Panc1 (cell line): ENCODE measurements at regions of chr11 and their contacts with region 1.

Region 1: GRCh38 chr11:64358907-64359711 is at the start of gene RPS6KA4:
- DNase-seq: no peak
- ATAC-seq: peak; percentile 79
- H3K4me3 ChIP-seq: peak within 1 kb of the TSS; percentile 76 to 86
- H3K27ac ChIP-seq: peak within 1 kb of the TSS; percentile 88
- H3K4me1 ChIP-seq: peaks cover 48% of the 10 kb centered on the region
- H3K27me3 ChIP-seq: no peaks in the 10 kb centered on the region
- CTCF ChIP-seq: no peak
- total RNA-seq, gene RPS6KA4: 74.0 TPM

Region 2: GRCh38 chr11:64165849-64166635 is 193.1 kb before region 1 on chr11 and contains the start of gene MACROD1:
- CTCF ChIA-PET with region 1: no interaction called
- POLR2A ChIA-PET with region 1: no interaction called
- in situ Hi-C with region 1: no loop called
- intact Hi-C with region 1: no loop called
- DNase-seq: no peak
- ATAC-seq: peak; percentile 96
- H3K4me3 ChIP-seq: peak within 1 kb of the TSS; percentile 61 to 74
- H3K27ac ChIP-seq: peak within 1 kb of the TSS; percentile 81
- H3K4me1 ChIP-seq: peaks cover 11% of the 10 kb centered on the region
- H3K27me3 ChIP-seq: no peaks in the 10 kb centered on the region
- CTCF ChIP-seq: no peak; the same call in 1 of the 2 replicates
- total RNA-seq, gene MACROD1: 16.8 TPM

Region 3: DNA sequence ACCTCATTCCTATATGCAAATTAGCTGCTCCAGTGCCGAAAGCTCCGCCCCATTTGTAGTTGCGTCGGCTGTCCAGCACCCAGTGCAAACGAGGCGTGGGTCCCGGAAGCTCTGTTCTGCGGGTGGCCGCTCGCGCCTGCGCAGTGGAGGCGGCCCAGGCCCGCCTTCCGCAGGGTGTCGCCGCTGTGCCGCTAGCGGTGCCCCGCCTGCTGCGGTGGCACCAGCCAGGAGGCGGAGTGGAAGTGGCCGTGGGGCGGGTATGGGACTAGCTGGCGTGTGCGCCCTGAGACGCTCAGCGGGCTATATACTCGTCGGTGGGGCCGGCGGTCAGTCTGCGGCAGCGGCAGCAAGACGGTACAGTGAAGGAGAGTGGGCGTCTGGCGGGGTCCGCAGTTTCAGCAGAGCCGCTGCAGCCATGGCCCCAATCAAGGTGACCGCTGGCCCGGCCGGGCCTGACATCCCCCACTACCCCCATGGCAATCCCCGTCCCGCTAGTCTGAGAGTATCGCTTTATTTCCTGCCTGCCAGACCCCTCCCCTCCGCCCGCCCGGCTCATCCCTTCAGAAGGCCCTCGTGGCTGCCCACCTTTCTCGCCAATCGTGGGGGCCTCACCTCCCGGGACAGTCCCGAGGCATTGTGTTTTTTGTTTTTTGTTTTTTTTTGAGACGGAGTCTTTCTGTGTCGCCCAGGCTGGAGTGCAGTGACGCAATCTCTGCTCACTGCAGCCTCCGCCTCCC is 41.0 kb before region 1 on chr11 and contains the start of gene PRDX5:
- CTCF ChIA-PET with region 1: interaction called, 21 read pairs
- POLR2A ChIA-PET with region 1: interaction called, 5 read pairs
- in situ Hi-C with region 1: no loop called
- intact Hi-C with region 1: loop called (anchors 1 kb)
- DNase-seq: no peak
- ATAC-seq: peak; percentile 87
- H3K4me3 ChIP-seq: peak within 1 kb of the TSS; percentile 74 to 77
- H3K27ac ChIP-seq: peak within 1 kb of the TSS; percentile 100
- H3K4me1 ChIP-seq: peaks cover 48% of the 10 kb centered on the region
- H3K27me3 ChIP-seq: no peaks in the 10 kb centered on the region
- CTCF ChIP-seq: no peak; the same call in 1 of the 2 replicates
- total RNA-seq, gene PRDX5: 492 TPM

Region 4: DNA sequence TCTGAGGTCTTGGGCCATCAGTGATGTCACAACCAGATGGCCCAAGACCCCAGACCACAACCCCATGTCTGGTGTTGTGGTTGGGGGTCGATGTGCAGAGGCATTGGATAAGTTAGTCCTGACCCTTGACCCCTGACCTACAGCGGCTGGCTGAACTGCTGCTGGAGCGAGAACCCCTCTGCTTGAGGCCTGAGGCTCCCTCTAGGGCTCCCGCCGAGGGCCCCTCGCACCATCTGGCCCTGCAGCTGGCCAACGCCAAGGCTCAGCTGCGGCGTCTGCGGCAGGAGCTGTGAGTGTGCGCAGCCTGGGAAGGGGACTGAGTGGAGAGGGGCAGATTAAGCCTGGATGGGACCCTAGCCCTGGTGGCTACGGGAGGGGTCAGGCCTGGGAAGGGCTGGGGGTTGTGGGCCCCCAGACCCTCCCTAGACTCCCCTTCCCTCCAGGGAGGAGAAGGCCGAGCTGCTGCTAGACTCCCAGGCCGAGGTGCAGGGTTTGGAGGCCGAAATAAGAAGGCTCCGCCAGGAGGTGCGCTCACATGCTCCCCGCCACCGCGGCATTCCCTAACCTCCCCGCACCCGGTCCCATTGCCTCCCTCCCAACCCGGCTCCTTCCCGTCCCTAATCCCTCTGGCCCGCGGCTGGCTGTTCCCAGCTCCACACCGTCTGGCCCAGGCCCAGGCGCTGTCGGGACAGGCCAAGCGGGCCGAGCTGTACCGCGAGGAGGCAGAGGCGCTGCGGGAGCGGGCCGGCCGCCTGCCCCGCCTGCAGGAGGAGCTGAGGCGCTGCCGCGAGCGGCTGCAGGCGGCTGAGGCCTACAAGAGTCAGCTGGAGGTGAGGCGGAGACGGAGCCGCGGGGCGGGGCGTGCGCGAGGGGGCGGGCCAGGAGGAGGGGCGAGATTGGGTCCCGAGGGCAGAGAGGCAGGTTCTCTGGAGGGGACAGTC is 17.0 kb before region 1 on chr11:
- CTCF ChIA-PET with region 1: interaction called, 33 read pairs
- POLR2A ChIA-PET with region 1: interaction called, 7 read pairs
- in situ Hi-C with region 1: no loop called
- intact Hi-C with region 1: no loop called
- DNase-seq: peak; percentile 43
- ATAC-seq: peak; percentile 95
- H3K4me3 ChIP-seq: peak overlapping the region; percentile 38 to 60
- H3K27ac ChIP-seq: peak overlapping the region; percentile 78
- H3K4me1 ChIP-seq: peaks cover 22% of the 10 kb centered on the region
- H3K27me3 ChIP-seq: no peaks in the 10 kb centered on the region
- CTCF ChIP-seq: peak; percentile 47; the same call in 1 of the 2 replicates

Region 5: GRCh38 chr11:64448599-64449556 is 89.8 kb after region 1 on chr11:
- CTCF ChIA-PET with region 1: interaction called, 14 read pairs
- POLR2A ChIA-PET with region 1: no interaction called
- in situ Hi-C with region 1: no loop called
- intact Hi-C with region 1: no loop called
- DNase-seq: peak; percentile 47
- ATAC-seq: peak; percentile 97
- H3K4me3 ChIP-seq: peak overlapping the region; percentile 30 to 56
- H3K27ac ChIP-seq: no peak overlapping the region
- H3K4me1 ChIP-seq: peaks cover 15% of the 10 kb centered on the region
- H3K27me3 ChIP-seq: peaks cover 6% of the 10 kb centered on the region; the same call in 1 of the 2 replicates
- CTCF ChIP-seq: peak; percentile 95

Region 6: GRCh38 chr11:64759561-64760349 is 400.6 kb after region 1 on chr11 and contains the start of gene PYGM:
- CTCF ChIA-PET with region 1: interaction called, 17 read pairs
- POLR2A ChIA-PET with region 1: no interaction called
- in situ Hi-C with region 1: no loop called
- intact Hi-C with region 1: no loop called
- DNase-seq: no peak
- ATAC-seq: peak; percentile 44
- H3K4me3 ChIP-seq: no peak within 1 kb of the TSS
- H3K27ac ChIP-seq: no peak within 1 kb of the TSS
- H3K4me1 ChIP-seq: peaks cover 23% of the 10 kb centered on the region
- H3K27me3 ChIP-seq: no peaks in the 10 kb centered on the region
- CTCF ChIP-seq: no peak
- total RNA-seq, gene PYGM: 0.39 TPM